HCT116 (cell line): ENCODE measurements at regions of chr5 and their contacts with region 1.

Region 1: DNA sequence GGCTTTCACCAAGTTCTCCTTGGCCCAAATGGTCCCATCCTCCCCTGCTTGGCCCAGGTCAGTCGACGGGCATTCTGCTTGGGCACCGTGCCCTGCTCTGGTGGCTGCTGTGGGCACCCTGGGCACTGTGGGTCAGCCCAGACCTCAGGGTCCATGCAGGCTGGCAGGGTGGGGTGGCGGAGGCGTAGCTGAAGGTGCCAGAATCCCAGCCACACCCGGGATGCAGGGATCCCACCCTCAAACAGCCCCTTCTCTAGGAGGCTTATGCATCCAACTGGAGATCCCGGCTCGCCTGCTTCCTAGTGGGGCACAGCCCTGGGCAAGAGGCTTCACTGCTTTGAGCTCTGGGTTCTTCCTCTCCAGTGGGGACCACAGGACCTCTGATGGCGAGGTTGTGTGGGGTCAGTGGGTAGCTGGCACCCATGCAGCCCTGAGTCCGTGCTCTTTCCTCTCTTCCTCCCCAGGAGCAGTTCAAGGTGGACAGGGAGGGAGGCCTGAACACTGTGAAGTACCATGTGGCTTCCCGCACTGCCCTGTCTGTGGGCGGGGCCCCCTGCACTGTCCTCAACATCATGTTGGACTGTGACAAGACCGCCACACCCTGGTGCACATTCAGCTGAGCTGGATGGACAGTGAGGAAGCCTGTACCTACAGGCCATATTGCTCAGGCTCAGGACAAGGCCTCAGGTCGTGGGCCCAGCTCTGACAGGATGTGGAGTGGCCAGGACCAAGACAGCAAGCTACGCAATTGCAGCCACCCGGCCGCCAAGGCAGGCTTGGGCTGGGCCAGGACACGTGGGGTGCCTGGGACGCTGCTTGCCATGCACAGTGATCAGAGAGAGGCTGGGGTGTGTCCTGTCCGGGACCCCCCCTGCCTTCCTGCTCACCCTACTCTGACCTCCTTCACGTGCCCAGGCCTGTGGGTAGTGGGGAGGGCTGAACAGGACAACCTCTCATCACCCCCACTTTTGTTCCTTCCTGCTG is 9.4 kb downstream of the B4GALT7 start:
- DNase-seq: no peak
- ATAC-seq: no peak
- H3K4me3 ChIP-seq: no peak overlapping the region
- H3K27ac ChIP-seq: no peak overlapping the region
- H3K4me1 ChIP-seq: peaks cover 4 to 8% of the 10 kb centered on the region in 2 experiments; a peak in 2 of 4 replicates
- H3K27me3 ChIP-seq: no peaks in the 10 kb centered on the region
- CTCF ChIP-seq: no peak
- POLR2A ChIP-seq: no peak
- RAD21 ChIP-seq: no peak

Region 2: DNA sequence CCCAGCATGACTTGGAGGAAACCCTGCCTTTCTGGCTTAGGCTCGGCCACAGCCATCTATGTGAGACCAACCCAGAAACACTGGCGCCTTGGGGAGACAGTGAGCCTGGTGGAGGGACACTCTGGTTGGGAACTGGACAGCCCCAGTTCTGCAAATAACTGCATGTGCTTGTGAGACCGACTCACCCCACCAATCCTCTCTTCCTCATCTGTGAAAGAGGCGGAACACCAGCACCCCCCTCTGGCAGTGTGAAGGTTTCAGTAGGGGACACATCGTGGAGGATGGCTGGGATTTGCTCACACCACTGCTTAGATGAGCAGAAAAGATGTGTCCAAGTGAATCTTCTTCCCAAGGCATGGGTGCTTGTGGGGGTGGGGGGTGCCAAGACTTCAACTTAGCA is 460.5 kb after region 1 on chr5:
- CTCF ChIA-PET with region 1: no interaction called
- POLR2A ChIA-PET with region 1: no interaction called
- RAD21 ChIA-PET with region 1: no interaction called
- intact Hi-C with region 1: loop called (anchors 10 kb)
- DNase-seq: peak; percentile 35
- ATAC-seq: peak; percentile 90
- H3K4me3 ChIP-seq: no peak overlapping the region
- H3K27ac ChIP-seq: no peak overlapping the region
- H3K4me1 ChIP-seq: peaks cover 0 to 5% of the 10 kb centered on the region in 2 experiments; a peak in 1 of 4 replicates
- H3K27me3 ChIP-seq: no peaks in the 10 kb centered on the region
- CTCF ChIP-seq: peak; percentile 57 to 67 (median 66); a peak in 5 of 6 replicates
- POLR2A ChIP-seq: no peak
- RAD21 ChIP-seq: peak; percentile 75

Region 3: DNA sequence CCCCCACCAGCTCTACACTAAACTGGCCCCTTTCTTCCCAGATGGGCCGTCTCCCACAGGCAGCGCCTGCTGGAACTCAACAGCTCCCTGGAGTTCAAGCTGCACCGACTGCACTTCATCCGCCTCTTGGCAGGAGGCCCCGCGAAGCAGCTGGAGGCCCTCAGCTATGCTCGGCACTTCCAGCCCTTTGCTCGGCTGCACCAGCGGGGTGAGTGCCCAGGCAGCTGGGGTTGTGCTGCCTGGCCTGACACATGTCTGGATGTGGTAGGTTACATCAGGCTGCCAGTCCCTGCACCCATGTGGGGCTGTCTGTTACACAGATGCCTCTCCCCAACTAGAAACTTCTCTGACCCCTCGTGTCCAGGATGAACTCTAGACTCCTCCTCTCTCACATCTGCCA is 534.5 kb after region 1 on chr5:
- CTCF ChIA-PET with region 1: no interaction called
- POLR2A ChIA-PET with region 1: no interaction called
- RAD21 ChIA-PET with region 1: no interaction called
- intact Hi-C with region 1: no loop called
- DNase-seq: no peak
- ATAC-seq: no peak
- H3K4me3 ChIP-seq: no peak overlapping the region
- H3K27ac ChIP-seq: no peak overlapping the region
- H3K4me1 ChIP-seq: peaks cover 0 to 10% of the 10 kb centered on the region in 2 experiments; a peak in 1 of 4 replicates
- H3K27me3 ChIP-seq: no peaks in the 10 kb centered on the region
- CTCF ChIP-seq: no peak
- POLR2A ChIP-seq: no peak
- RAD21 ChIP-seq: no peak